HEK293 (cell line): ENCODE measurements at regions of chr9 and their contacts with region 1.

Region 1: DNA sequence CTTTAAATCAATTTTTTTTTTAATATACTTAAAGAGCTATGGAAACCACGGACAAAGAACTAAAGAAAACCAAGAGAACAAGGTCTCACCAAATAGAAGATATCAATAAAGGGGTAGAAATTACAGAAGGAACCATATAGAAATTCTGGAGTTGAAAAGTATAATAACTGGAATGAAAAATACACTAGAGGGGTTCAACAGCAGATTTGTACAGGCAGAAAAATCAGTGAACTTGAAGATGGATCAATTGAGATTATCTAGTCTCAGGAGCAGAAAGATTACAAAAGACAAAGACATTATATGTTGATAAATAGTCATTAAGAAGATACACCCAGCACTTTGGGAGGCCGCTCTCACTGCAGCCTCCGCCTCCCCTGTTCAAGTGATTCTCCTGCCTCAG is 56.1 kb downstream of the GAPVD1 start:
- H3K4me3 ChIP-seq: no peak overlapping the region
- H3K27ac ChIP-seq: no peak overlapping the region
- H3K4me1 ChIP-seq: no peaks in the 10 kb centered on the region
- CTCF ChIP-seq: no peak

Region 2: GRCh38 chr9:125296833-125297372 is 20.8 kb before region 1 on chr9:
- CTCF ChIA-PET with region 1: interaction called, 4 read pairs
- POLR2A ChIA-PET with region 1: interaction called, 11 read pairs
- H3K4me3 ChIP-seq: no peak overlapping the region
- H3K27ac ChIP-seq: no peak overlapping the region
- H3K4me1 ChIP-seq: no peaks in the 10 kb centered on the region
- CTCF ChIP-seq: no peak

Region 3: DNA sequence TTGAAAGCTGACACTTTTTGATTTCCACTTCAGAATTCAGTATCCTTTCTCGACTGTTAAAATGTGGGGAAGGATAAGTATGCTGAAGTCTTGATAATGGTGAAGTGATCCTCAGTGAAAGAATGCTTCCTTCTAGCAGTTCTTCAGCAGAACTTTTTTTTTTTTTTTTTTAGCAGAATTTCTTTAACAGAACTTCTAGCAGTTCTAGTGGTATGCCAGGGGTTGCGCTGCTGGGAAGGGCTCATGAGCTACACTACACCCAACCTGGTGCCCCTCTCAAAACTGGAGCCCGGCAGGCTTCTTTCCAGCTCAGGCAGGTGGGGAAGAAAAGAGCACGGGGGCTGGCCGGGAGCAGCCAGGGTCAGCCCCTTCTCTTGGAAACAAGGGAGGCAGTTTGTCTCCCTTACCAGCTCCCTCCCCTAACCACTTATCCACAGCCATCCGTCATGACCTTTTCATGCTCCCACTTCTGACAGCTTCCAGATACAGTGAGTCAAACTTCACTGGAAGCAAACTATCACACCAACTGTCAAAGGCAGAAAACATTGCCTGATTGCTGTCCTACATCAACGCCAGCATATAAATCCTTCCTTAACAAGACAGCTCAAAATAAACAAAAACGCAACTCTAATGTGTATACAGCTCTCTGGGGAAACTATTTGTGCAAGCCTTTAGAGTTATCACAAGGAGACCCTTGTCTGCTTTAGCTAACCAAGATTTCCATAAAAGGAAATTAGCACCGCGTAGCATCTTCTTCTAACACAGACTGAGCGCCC is 155.4 kb after region 1 on chr9:
- CTCF ChIA-PET with region 1: no interaction called
- POLR2A ChIA-PET with region 1: no interaction called
- H3K4me3 ChIP-seq: no peak overlapping the region
- H3K27ac ChIP-seq: peak overlapping the region; percentile 14
- H3K4me1 ChIP-seq: peaks cover 10% of the 10 kb centered on the region
- CTCF ChIP-seq: no peak